HEK293 (cell line): ENCODE measurements at regions of chr17 and their contacts with region 1.

Region 1: GRCh38 chr17:50853015-50853615 is 13.0 kb downstream of the TOB1 start:
- H3K4me3 ChIP-seq: no peak overlapping the region
- H3K27ac ChIP-seq: no peak overlapping the region
- H3K4me1 ChIP-seq: no peaks in the 10 kb centered on the region
- CTCF ChIP-seq: no peak

Region 2: GRCh38 chr17:50640701-50641351 is 212.3 kb before region 1 on chr17:
- CTCF ChIA-PET with region 1: no interaction called
- POLR2A ChIA-PET with region 1: no interaction called
- H3K4me3 ChIP-seq: no peak overlapping the region
- H3K27ac ChIP-seq: no peak overlapping the region
- H3K4me1 ChIP-seq: peaks cover 3% of the 10 kb centered on the region
- CTCF ChIP-seq: no peak

Region 3: DNA sequence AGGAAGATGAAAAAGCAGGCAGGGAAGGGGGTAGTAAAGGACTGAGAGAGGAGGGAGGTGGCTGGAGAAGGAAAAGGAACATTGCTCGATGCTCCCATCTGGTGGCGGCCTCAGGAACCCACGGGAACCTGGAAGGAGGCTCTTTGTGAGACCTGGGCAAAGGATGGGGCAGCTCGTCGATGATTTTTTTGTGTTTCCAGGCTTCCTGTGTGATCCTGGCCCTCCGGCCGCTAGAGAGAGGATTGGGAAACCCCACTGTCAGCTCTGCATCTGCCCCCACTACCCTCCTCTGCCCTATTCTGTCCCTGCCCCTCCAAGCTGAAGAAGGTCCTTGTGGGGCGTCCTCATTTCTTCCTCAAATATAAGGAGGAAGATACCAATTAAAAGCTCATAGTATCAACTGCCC is 11.2 kb before region 1 on chr17:
- CTCF ChIA-PET with region 1: interaction called, 97 read pairs
- POLR2A ChIA-PET with region 1: no interaction called
- H3K4me3 ChIP-seq: no peak overlapping the region
- H3K27ac ChIP-seq: no peak overlapping the region
- H3K4me1 ChIP-seq: no peaks in the 10 kb centered on the region
- CTCF ChIP-seq: peak; percentile 82

Region 4: GRCh38 chr17:50883850-50884438 is 30.8 kb after region 1 on chr17:
- CTCF ChIA-PET with region 1: interaction called, 9 read pairs
- POLR2A ChIA-PET with region 1: interaction called, 11 read pairs
- H3K4me3 ChIP-seq: no peak overlapping the region
- H3K27ac ChIP-seq: no peak overlapping the region
- H3K4me1 ChIP-seq: no peaks in the 10 kb centered on the region
- CTCF ChIP-seq: no peak

Region 5: DNA sequence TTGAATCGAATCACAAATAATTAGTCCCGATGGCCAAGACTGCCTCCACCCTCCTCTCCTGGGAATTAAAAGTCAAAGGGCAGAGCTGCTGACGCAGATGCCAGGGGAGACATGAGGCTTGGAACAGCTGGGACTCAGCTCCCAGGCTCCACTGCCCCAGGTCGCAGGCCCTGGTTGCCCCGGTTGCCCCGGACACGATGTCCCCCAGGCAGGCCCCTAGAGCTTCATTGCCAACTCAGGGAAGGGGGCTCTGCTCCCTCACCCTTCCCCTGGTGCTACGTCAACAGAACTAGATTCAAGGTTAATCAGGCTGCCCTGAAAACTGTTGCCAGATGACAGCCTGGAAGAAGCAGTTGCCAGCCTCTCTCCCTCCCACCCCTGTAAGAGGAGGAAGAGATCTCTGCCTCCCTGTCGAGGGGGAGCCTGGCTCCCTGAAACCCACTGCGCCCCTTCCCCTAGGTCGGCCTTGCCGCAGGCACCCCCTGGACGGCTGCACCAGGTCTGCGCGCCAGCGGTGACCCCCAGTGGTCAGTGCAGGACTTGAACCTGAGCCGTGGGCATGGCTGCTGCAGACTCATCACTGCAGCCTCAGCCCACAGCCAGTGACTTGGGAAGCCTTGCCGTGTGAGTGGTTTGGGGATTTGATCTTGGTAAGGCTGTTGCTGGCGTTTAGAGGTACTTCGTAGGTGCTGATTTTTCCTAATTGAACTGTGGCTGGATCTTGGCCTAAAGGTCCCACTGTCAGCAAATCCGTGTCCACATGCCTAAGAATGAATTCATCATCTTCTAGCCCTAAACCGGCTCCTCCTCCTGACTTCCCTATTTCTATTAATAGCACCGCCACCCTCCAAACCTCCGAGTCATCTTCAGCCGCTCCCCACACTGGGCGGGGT is 97.1 kb after region 1 on chr17:
- CTCF ChIA-PET with region 1: interaction called, 329 read pairs
- POLR2A ChIA-PET with region 1: interaction called, 4 read pairs
- H3K4me3 ChIP-seq: no peak overlapping the region
- H3K27ac ChIP-seq: peak overlapping the region; percentile 44; the same call in 1 of the 2 replicates
- H3K4me1 ChIP-seq: no peaks in the 10 kb centered on the region; the same call in 1 of the 2 replicates
- CTCF ChIP-seq: peak; percentile 94

Region 6: GRCh38 chr17:50956750-50957523 is 103.8 kb after region 1 on chr17:
- CTCF ChIA-PET with region 1: interaction called, 329 read pairs
- POLR2A ChIA-PET with region 1: interaction called, 6 read pairs
- H3K4me3 ChIP-seq: no peak overlapping the region
- H3K27ac ChIP-seq: no peak overlapping the region
- H3K4me1 ChIP-seq: no peaks in the 10 kb centered on the region; the same call in 1 of the 2 replicates
- CTCF ChIP-seq: peak; percentile 80

Region 7: GRCh38 chr17:50967795-50968194 is 114.7 kb after region 1 on chr17:
- CTCF ChIA-PET with region 1: interaction called, 12 read pairs
- POLR2A ChIA-PET with region 1: no interaction called
- H3K4me3 ChIP-seq: no peak overlapping the region
- H3K27ac ChIP-seq: no peak overlapping the region
- H3K4me1 ChIP-seq: no peaks in the 10 kb centered on the region
- CTCF ChIP-seq: no peak

Region 8: GRCh38 chr17:51056813-51057510 is 203.8 kb after region 1 on chr17:
- CTCF ChIA-PET with region 1: interaction called, 24 read pairs
- POLR2A ChIA-PET with region 1: no interaction called
- H3K4me3 ChIP-seq: no peak overlapping the region
- H3K27ac ChIP-seq: peak overlapping the region; percentile 17
- H3K4me1 ChIP-seq: peaks cover 13% of the 10 kb centered on the region
- CTCF ChIP-seq: 0 out of 2 replicates have a peak, but pooled peaks have one; percentile 12